HEK293T (cell line): ENCODE measurements at regions of chr9 and their contacts with region 1.

Region 1: DNA sequence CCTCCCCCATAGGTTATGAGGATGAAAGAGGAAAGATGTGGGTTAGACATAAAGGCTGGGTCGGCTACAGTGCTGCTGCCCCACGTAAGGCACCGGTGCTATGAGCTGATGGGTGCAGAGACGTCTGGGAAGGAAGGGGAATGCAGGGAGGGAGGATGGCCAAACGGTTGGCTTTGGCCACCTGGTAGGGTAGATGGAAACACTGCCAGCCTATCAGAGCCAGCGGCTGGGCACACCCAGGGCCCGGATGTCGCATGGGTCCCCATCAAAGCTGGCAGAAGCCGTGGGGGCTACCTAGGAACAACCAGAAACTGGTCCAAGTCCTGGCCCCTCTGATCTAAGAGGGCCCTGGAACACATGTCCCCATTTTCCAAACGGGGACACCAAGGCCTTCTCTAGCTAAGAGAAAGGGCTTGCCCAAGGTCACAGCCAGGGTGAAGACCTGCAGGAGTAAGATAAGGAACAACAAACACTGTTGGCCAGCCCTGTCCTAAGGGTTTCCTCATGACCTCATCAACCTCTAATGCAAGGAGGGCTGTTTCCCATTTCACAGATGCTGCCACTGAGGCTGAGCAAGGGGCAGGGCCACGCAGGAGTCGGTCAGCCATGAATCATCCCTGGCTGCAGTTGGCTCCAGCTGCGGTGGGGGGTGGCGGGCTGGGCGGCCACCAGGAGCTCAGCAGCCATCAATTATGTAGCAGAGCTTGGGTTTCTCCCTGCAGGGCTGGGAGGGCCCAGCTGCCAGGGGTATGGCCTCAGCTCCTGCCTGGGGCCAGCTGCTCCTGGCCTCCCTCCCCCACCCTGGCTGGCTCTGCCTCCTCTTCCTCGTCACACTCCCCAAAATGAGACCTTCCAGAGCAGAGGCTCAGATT is 4.9 kb downstream of the SH3GLB2 start:
- DNase-seq: peak; percentile 66

Region 2: DNA sequence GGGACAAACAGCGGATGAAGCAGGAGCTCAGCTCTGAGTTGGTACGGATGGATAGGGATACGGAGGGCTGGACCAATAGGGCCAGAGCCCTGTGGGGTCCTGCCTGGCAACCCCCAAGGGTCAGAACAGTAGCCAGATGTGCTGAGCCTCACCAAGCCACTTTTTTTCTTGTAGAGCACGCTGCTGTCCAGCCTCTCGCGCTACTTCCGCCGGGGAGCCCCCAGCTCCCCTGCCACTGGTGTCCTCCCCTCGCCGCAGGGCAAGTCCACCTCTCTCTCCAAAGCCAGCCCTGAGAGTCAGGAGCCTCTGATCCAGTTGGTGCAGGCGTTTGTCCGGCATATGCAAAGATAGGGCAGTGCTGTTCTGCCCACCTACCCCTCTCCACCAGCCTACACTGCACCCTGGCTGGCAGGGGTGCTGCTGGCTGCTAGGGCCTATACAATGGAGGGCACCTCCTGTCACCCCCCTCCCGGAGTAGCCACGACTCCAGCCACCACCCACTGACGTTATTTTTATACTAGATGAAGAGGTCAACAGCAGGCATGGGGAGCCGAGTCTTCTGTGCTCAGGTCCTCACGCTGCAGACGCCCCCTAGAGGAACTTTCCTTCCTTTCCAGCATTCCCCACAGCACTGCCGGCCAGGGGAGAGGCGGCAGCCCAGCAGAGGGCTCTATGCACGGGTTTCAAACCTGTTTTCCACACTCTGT is 16.8 kb before region 1 on chr9:
- CTCF ChIA-PET with region 1: interaction called, 10 read pairs
- POLR2A ChIA-PET with region 1: interaction called, 3 read pairs
- DNase-seq: peak; percentile 86

Region 3: GRCh38 chr9:129270903-129271431 is 247.7 kb after region 1 on chr9:
- CTCF ChIA-PET with region 1: no interaction called
- POLR2A ChIA-PET with region 1: no interaction called
- DNase-seq: no peak